Right ventricle myocardium superior (tissue), 1 donor: ENCODE measurements at regions of chr2 and their contacts with region 1.

Region 1: GRCh38 chr2:42828487-42829425 is 36.4 kb upstream of the HAAO start:
- DNase-seq: peak; percentile 87
- ATAC-seq: peak; percentile 95

Region 2: DNA sequence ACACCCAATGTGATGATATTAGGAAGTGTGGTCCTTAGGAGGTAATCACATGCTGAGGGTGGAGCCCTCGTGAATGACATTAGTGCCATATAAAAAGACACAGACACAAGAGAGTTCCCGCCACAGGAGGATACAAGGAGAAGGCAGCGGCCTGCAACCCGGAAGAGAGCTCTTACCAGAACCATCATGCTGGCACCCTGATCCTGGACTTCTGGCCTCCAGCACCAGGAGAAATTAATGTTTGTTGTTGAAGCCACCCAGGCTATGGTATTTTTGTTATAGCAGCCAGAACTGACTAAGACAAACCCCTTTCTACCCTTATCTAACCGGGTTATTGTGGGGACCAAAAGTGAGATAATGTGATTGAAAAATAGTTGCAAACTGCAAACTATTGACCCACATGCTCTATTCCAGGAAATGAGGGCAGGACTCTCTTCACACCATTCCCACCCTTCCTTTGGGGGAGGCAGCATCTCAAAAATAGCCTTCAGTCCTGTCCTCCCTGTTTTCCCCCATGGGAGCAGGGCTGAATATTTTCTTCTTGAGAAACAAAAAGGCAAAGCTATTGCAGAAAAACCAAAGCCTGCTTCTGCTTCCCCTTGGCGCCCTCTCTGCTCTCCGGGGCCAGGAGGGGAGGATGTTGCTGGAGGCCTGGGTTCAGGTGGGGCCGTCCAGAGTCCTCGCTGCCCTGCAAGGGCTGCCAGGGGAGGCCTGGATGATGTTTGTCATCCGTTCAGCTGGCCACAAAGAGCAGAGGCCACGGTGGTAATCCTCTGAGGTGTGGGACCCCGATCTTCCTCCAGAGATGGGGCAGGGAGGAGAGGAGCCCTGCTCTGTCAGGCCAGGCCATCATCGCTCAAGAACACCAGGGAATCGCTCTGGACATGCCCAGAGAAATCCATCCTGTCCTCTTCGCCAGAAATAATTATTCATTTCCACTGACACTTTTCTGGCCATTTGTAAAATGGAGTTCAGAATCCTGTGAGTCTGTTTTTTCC is 37.4 kb after region 1 on chr2:
- intact Hi-C with region 1: no loop called
- DNase-seq: peak; percentile 78
- ATAC-seq: peak; percentile 82

Region 3: DNA sequence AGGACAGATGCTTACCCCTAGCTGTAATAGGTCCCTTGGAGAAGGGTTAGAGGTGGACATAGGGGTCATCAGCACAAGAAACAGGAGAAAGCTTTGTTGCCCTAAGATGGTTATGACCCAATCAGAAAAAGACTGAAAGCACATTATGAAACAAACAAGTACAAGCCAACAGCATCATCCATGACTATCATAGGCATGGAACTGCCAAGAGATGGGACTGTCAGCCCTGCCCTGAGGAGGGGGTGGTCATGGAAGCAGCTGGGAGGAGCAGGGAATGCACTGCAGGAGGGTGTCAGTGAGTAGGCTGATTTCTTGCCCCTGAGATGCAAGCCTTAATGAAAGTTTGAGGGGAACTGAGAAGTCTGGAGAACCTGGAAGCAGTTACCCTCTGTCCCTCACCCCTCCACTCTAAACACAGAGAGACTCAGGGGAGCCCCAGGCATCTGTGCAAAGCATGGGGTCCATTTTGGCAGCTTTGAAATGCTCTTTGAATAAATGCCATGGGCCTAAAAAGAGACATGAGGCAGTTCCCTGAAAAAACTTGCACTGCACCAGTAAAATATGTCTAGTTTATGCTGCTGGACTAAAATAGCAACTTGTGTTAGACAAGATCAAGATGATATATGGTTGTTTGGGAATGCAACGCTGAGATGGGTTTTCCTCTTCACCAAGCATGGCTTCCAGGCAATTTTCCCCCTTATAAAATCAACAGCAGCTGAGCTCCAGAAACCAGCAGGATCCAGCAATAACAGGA is 520.3 kb after region 1 on chr2:
- intact Hi-C with region 1: no loop called
- DNase-seq: no peak
- ATAC-seq: peak; percentile 4

Region 4: DNA sequence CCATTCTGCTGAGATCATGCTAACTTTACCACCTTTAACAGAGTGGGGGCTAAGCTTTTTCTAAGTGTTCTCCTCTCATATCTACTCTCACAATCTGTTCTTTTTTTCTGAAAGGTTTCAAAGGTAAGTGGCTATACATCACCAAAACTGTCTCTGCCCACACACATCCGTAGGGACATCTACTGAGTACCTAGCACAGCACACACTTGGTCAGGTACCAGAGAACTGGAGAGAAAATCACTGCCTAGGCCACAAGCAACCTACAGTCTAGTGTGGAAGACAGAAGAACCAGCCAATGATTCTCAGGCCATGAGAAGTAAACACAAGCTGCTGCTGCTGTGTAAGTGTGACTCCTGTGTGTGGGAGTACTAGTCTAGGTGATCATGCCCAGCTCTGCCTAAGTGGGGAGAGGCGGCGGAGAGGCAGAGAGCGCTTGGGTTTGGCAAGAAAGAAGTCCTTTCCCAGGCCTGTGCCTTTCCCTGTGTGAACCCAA is 573.7 kb after region 1 on chr2:
- intact Hi-C with region 1: no loop called
- DNase-seq: no peak
- ATAC-seq: no peak

Region 5: DNA sequence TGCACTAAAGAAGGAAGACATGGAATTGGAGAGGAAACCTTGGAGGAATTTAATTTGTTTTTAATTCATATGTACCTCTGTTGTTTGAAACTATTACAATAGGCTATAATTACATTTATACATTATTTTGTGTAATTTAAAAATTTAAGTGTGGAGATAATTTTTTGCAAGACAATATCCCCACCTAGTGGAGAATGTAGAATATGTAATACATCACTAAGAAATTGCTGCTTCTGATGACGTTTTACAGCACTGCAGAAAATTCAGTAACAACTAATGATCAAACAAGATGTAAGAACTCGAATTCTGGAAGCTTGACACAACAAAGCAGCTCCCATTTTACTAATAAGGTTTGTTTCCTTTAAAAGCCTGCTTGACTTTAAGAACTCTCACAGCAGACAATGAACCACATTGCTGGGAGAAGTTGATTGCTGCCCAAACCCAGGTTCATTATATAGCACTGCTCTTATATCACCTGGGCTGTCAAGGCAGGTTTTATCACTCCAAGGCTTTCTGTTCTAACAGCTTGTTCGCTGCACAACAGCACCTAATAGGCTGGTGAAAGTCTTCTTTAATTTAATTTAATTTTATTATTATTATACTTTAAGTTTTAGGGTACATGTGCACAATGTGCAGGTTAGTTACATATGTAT is 713.7 kb after region 1 on chr2:
- intact Hi-C with region 1: loop called (anchors 5 kb)
- DNase-seq: no peak
- ATAC-seq: peak; percentile 30